ENCODE measurements at regions of chr1 and their contacts with region 1.

Region 1: GRCh38 chr1:29235955-29236684 is at the start of gene PTPRU:
- DNase-seq: peak; percentile 81 to 89 (median 82)
- ATAC-seq: peak; percentile 95
- H3K4me3 ChIP-seq: peak within 1 kb of the TSS; percentile 6
- H3K4me1 ChIP-seq: peaks cover 22% of the 10 kb centered on the region
- CTCF ChIP-seq: peak; percentile 90
- total RNA-seq, gene PTPRU: 1.8 to 14.3 (median 2.2) TPM

Region 2: DNA sequence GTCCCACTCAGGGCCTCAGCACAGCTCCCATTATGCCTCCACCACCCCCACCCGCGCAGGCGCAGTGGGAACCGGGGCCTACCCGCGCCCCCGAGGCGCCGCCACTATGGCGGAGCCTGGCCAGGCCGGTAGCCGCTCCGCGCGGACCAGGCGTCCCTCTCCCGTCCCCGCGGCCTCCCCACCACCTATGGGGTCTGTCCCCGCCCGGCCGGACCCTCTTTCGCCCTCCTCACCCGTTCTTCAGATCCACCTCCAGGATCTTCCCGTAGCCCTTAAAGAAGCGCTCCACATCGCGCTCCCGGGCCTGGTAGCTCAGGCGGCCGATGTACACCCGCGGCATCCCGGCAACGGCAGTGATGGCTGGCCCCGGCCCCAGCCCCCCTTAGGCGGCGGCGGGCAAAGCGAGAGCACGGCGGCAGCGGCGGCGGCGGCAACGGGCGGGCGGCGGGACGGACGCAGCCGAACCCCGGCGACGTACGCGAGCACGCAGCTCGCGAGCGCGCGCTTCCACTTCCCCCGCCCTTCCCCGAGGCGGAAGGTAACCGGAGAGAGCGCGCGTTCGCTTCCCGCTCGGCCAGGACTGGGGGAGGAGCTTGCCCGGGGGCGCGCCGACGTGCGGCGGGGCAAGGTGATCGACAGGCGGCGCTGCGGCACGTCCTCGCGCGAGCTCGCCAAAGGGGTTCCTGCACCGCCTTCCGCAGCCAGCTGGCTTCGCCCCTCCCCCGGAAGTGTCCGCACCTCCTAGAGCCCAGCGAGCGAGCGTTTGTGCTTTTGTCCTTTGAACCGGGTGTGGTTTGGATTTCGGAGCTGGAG is 54.5 kb before region 1 on chr1 and contains the start of gene SRSF4:
- intact Hi-C with region 1: no loop called
- DNase-seq: peak; percentile 99 to 100 (median 100)
- ATAC-seq: peak; percentile 95
- H3K4me3 ChIP-seq: peak within 1 kb of the TSS; percentile 94
- H3K4me1 ChIP-seq: peaks cover 43% of the 10 kb centered on the region
- CTCF ChIP-seq: peak; percentile 90
- total RNA-seq, gene SRSF4: 63.7 to 140 (median 75.2) TPM

Region 3: DNA sequence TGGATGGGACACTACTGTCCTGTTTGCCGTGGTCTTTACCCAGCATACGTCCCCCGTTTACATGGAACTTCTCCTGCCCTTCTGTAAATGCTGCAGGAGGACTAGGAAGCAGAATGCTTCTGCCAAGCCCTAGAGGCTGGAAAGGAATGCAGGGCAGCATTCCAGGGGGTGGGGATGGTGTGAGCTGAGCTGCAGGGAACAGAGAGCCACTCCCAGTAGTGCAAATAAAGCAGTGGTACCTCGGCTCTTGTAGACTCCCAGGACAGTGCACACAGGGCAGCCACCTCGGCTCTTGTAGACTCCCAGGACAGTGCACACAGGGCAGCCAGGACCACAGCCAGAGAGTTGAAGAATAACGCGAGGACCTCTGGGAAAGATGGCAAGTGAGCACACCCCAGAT is 35.6 kb after region 1 on chr1:
- intact Hi-C with region 1: no loop called
- DNase-seq: peak; percentile 83 to 91 (median 84)
- ATAC-seq: peak; percentile 98
- H3K4me3 ChIP-seq: no peak overlapping the region
- H3K4me1 ChIP-seq: peaks cover 12% of the 10 kb centered on the region
- CTCF ChIP-seq: no peak

Region 4: GRCh38 chr1:29426810-29427209 is 190.7 kb after region 1 on chr1:
- intact Hi-C with region 1: no loop called
- DNase-seq: no peak
- ATAC-seq: no peak
- H3K4me3 ChIP-seq: no peak overlapping the region
- H3K4me1 ChIP-seq: no peaks in the 10 kb centered on the region
- CTCF ChIP-seq: no peak

Region 5: DNA sequence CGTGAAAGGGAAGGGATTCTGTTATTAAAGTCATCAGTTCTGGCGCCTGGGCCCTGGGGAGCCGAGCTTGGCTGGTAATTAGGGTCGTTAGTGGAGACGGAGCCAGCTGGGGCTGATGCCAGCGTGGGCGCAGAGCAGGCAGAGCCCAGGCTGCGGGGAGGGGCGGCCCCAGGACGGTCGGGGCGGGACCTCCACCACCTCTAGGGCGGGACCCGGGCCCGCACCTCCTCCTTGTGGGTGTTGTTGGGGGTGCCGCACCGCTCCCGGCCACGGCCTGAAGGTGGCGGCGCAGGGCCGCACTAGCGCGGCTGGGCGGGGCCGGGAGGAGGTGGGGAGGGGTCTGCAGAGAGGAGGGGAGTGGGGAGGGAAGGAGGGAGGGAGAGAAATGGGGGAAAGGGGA is 470.8 kb after region 1 on chr1:
- intact Hi-C with region 1: no loop called
- DNase-seq: no peak
- ATAC-seq: peak; percentile 59
- H3K4me3 ChIP-seq: no peak overlapping the region
- H3K4me1 ChIP-seq: no peaks in the 10 kb centered on the region
- CTCF ChIP-seq: no peak

Region 6: DNA sequence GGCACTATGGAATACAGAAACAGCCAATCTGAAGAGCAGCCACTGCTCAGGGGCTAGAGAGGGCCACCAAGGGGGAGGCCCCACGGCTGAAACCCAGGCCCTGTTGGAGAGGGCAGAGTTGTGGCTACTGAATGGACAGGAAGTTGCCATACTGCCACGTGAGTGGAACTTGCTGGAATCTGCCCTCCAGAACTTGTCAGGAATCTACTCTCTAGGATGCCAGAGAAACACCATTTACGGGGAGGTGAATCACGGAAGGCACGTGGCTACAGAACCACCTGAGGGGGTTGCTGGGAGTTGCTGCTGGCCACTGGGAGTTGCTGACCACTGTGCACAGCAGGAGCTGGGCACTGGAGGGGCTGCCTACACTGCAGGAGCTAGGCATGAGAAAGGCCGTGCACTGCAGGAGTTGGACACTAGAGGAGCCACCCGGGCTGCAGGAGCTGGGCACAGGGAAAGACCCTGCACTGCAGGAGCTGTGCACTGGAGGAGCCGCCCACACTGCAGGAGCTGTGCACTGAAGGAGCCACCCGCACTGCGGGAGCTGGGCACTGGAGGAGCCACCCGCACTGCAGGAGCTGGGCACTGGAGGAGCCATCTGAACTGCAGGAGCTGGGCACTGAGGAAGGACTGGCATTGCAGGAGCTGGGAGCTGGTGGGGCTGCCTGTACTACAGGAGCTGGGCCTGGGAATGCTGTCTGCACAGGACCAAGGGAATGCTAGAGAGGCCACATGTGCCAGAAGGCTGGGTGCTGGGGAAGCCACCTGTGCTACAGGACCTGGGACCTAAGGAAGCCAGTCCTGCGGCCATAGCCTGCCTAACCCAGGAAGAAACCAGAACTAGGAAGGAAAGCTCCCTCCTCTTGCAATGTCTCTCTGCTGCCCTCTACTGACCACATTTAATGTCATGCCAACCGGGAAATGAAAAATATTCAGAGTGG is 1143.8 kb after region 1 on chr1:
- intact Hi-C with region 1: loop called in 1 of 2 experiments (anchors 5 kb)
- DNase-seq: peak in 2 of 3 donors; percentile 39 to 82
- ATAC-seq: peak; percentile 82
- H3K4me3 ChIP-seq: no peak overlapping the region
- H3K4me1 ChIP-seq: no peaks in the 10 kb centered on the region
- CTCF ChIP-seq: peak; percentile 78

Measured in mucosa of descending colon (tissue), 3 donors.